Activated CD4-positive, alpha-beta T cell treated with anti-CD3 and anti-CD28 coated beads for 36 hours (primary cell): ENCODE measurements at regions of chr7 and their contacts with region 1.

Region 1: DNA sequence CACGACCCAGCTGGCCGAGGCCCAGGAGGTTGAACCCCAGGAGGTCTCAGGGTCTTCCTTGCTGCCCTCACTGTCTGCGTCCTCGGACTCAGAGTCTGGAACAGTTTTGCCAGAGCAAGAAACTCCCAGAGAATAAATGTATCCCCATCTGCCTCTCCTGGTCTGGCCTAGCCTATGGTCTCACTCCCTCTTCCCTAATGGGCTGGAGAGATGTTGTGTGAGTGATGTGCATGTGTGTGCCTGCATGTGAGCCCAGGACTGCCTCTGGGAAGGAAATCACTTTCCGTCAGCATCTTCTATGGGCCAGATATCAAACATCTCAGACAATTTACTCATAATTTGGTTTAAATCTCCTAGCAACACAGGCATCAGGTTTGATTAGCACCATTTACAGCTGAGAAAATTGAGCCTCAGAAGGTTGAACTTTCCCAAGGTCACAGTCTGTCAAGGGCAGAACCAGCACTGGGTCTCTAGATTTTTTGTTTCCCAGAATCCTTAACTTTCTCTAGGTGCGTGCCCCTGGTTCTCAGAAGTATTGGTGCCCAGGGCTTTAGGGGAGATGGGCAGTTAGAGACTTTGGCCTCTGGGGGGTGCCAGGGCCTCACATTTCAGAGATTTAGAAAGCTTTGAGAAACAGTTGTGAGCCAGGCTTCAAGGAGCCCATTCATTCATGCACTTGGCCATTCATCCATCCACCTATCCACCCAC is 4.9 kb downstream of the TMEM270 start:
- DNase-seq: peak; percentile 48
- ATAC-seq: peak; percentile 36
- H3K4me3 Mint-ChIP-seq: no peak overlapping the region
- H3K27ac Mint-ChIP-seq: no peak overlapping the region
- H3K4me1 Mint-ChIP-seq: no peaks in the 10 kb centered on the region
- H3K27me3 Mint-ChIP-seq: no peaks in the 10 kb centered on the region

Region 2: GRCh38 chr7:73978661-73979563 is 113.0 kb after region 1 on chr7:
- CTCF ChIA-PET with region 1: no interaction called
- POLR2A ChIA-PET with region 1: no interaction called
- intact Hi-C with region 1: loop called in 1 of 2 experiments (anchors 1 kb)
- DNase-seq: peak; percentile 55
- ATAC-seq: peak; percentile 57
- H3K4me3 Mint-ChIP-seq: no peak overlapping the region
- H3K27ac Mint-ChIP-seq: no peak overlapping the region
- H3K4me1 Mint-ChIP-seq: no peaks in the 10 kb centered on the region
- H3K27me3 Mint-ChIP-seq: no peaks in the 10 kb centered on the region

Region 3: GRCh38 chr7:74183613-74184450 is 317.9 kb after region 1 on chr7:
- CTCF ChIA-PET with region 1: no interaction called
- POLR2A ChIA-PET with region 1: no interaction called
- intact Hi-C with region 1: no loop called
- DNase-seq: peak; percentile 41
- ATAC-seq: peak; percentile 89
- H3K4me3 Mint-ChIP-seq: no peak overlapping the region
- H3K27ac Mint-ChIP-seq: peak overlapping the region; percentile 67
- H3K4me1 Mint-ChIP-seq: peaks cover 78% of the 10 kb centered on the region
- H3K27me3 Mint-ChIP-seq: no peaks in the 10 kb centered on the region